Transverse colon (tissue), 4 donors: ENCODE measurements at regions of chr17 and their contacts with region 1.

Region 1: GRCh38 chr17:81034779-81035388 is at the start of gene BAIAP2:
- DNase-seq: peak; percentile 97
- H3K4me3 ChIP-seq: peak within 1 kb of the TSS; percentile 68 to 82 (median 79)
- H3K27ac ChIP-seq: peak within 1 kb of the TSS; percentile 67 to 84 (median 77)
- H3K4me1 ChIP-seq: peaks cover 11 to 67% (median 44%) of the 10 kb centered on the region in 4 donors
- H3K27me3 ChIP-seq: no peaks in the 10 kb centered on the region
- CTCF ChIP-seq: no peak
- EP300 ChIP-seq: no peak
- POLR2A ChIP-seq: peak; percentile 95
- total RNA-seq, gene BAIAP2: 11.7 to 62.1 (median 39.6) TPM

Region 2: DNA sequence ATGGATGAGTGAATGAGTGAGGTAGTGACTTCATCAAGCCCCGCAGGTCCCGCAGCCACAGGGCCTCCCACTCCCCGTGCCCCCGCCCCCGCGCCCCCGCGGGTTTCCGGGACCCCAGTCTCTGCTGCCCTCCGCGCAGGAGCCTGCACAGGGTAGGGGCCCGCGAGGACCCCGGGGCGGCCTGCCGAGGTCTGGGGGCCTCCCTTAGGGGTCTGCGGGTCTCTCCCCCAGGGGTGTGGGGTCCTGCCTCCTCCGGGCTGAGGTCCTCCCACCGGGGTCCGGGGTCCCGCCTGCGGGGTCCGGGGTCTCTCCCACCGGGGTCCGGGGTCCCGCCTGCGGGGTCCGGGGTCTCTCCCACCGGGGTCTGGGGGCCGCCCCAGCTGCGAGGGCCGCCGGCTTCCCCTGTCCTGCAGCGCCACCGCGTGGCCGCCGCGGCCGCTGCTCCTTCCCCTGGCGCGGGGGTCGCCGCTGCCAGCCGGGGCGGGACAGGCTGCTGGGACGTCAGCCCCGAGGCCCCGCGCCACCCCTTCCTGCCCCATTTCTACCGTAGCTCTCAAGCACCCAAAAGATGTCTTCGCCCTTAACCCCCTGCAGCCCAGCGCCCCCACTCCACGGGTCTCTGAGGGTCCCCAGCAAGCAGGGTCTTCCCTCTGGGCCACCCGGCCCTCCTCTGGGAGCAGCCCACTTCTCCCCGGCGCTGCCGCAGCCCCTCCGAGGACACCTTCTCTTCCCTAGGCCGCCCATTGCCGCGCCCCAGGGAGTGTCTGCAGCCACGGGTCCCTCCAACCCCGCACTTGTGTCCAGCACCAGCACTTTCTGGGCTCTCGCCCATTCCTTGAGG is 53.6 kb before region 1 on chr17:
- in situ Hi-C with region 1: no loop called
- intact Hi-C with region 1: loop called (anchors 5 kb)
- DNase-seq: no peak
- H3K4me3 ChIP-seq: peak overlapping the region in 2 of 4 donors; percentile 14 to 34
- H3K27ac ChIP-seq: no peak overlapping the region
- H3K4me1 ChIP-seq: peaks cover 3 to 10% (median 9%) of the 10 kb centered on the region in 4 donors
- H3K27me3 ChIP-seq: peaks cover 16% of the 10 kb centered on the region
- CTCF ChIP-seq: peak; percentile 28 to 84 (median 77)
- EP300 ChIP-seq: no peak
- POLR2A ChIP-seq: no peak